Right cardiac atrium (tissue), 5 donors: ENCODE measurements at regions of chr10 and their contacts with region 1.

Region 1: DNA sequence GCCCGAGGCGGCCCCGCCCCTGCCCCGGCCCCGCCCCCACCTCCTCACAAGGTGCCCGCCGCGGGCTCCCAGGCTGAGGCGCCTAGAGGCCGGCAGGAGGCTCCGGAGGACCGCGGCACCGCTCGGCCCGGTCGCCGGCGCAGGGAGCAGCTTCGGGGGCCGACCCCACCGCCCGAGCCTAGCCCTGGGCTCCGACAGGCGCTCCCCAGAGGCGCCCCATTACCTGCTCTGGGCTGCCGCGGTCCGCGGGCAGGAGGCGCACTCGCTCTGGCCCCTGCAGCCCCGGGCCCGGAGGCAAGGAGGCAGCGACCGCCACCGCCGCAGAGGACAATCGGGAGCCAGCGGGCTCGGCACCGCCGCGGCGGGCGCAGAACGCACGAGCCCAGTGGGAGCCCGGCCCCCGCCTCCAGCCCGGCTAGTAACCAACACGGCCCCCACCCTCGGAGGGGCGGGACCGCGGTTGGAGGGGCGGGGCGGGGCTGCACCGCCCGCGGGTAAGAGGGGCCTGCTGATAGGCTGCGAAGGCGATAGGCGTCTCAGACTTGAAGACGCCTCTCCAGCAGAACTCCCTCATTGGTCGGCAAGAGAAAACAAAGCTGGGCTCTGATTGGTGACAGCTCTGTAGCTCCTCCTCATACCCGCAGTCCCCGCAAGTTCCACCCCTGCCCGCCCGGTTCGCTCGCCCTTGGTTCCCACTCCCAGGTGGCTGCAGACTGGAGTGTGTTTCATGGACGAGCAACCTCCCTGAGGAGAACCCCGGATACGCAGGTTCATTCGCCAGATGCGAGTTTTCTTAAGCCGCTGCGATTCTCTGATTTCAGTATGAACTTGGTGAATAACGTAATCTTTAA is at the start of gene MPP7:
- DNase-seq: peak; percentile 94 to 98 (median 98)
- ATAC-seq: peak; percentile 100
- H3K4me3 ChIP-seq: peak within 1 kb of the TSS; percentile 75
- H3K27ac ChIP-seq: peak within 1 kb of the TSS; percentile 69
- H3K4me1 ChIP-seq: no peaks in the 10 kb centered on the region
- H3K27me3 ChIP-seq: no peaks in the 10 kb centered on the region
- total RNA-seq, gene MPP7: 11.5 to 20.3 (median 16.1) TPM

Region 2: GRCh38 chr10:28250782-28251181 is 52.1 kb before region 1 on chr10:
- intact Hi-C with region 1: loop called in 1 of 4 experiments (anchors 5 kb)
- DNase-seq: no peak
- ATAC-seq: no peak
- H3K4me3 ChIP-seq: no peak overlapping the region
- H3K27ac ChIP-seq: no peak overlapping the region
- H3K4me1 ChIP-seq: peaks cover 3% of the 10 kb centered on the region
- H3K27me3 ChIP-seq: no peaks in the 10 kb centered on the region

Region 3: GRCh38 chr10:28381903-28382347 is 79.1 kb after region 1 on chr10:
- intact Hi-C with region 1: loop called in 2 of 4 experiments (anchors 5 kb)
- DNase-seq: peak; percentile 72 to 89 (median 77)
- ATAC-seq: peak; percentile 87 to 95
- H3K4me3 ChIP-seq: no peak overlapping the region
- H3K27ac ChIP-seq: no peak overlapping the region
- H3K4me1 ChIP-seq: no peaks in the 10 kb centered on the region
- H3K27me3 ChIP-seq: no peaks in the 10 kb centered on the region

Region 4: DNA sequence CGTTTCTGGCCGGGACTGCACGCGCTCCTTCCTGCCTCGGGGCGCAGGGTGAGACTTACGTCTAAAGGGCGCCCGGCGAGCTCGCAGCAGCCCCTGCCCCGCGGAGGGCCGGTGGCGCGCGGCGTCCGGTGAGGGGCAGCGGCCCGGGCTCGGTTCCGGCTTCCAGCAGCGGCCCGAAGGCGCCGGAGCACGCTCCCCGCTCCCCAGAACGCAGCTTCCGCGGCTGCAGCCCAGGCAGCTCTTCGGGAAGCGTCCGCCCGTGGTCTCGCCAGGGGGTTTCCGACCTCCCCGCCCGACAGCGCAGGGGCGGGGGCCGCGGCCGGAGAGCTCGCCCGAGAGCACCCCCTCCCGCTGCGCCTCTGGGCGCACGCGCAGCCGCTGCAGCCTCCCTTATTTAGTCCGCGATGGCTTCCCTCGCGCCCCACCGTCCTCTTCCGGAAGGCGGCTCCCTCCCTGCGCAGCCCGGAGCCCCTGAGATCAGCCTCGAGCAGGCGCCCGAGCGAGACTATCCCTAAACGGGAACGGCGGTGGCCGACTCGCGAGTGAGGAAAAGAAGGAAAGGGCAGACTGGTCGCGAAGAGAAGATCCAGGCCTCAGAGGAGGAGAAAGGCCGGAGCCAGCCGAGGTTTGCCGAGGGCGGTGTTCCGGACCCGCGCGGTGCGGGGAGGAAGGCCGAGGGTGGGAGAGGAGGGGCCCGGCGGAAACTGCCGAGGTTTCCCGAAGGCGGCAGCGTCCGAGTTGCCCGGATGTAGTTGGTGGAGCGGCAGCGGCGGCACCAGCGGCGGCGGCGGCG is 229.7 kb after region 1 on chr10 and contains the start of gene WAC:
- intact Hi-C with region 1: no loop called
- DNase-seq: peak; percentile 96 to 99 (median 98)
- ATAC-seq: peak; percentile 96
- H3K4me3 ChIP-seq: peak within 1 kb of the TSS; percentile 98
- H3K27ac ChIP-seq: peak within 1 kb of the TSS; percentile 98
- H3K4me1 ChIP-seq: peaks cover 1% of the 10 kb centered on the region
- H3K27me3 ChIP-seq: no peaks in the 10 kb centered on the region
- total RNA-seq, gene WAC: 102 to 110 (median 104) TPM